Posterior vena cava (tissue), 2 donors: ENCODE measurements at regions of chr13 and their contacts with region 1.

Region 1: DNA sequence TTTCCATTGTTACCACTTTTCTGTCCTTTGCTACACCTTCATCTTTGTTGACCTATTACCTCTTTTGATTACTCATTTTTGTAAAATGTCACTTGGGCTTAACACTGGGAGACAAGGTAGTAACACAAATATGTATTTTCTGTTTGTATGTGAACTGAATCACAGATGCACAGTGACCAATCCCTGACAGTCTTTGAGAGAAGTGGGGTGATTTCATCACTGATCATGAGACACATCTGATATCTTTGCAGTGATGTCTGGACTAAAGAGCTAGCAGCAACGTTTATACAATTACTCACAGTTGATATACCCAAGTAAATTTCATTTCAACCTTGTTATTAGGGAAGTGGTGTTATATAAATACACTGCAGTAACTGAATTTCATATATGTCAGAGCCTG is 1397.4 kb upstream of the SPRY2 start:
- DNase-seq: no peak

Region 2: DNA sequence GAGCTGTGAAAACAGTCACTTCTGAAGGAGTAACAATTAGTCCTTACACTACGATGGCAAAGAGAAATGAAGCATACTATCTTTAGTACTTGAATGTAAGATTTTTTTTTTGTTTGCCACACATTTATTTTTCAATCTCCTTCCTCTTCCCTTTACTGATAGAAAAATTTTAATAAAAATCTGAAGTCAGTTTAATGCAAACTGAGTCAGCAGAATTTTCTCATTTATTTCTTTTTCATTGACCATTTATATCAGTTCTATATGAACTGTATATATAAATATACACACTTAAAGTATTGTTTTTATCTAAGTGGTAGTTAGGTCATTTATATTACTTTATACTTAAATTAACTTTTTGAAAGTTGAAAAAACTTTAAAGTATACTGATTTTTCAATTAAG is 388.3 kb before region 1 on chr13:
- intact Hi-C with region 1: loop called in 1 of 2 experiments (anchors 5 kb)
- DNase-seq: no peak

Region 3: DNA sequence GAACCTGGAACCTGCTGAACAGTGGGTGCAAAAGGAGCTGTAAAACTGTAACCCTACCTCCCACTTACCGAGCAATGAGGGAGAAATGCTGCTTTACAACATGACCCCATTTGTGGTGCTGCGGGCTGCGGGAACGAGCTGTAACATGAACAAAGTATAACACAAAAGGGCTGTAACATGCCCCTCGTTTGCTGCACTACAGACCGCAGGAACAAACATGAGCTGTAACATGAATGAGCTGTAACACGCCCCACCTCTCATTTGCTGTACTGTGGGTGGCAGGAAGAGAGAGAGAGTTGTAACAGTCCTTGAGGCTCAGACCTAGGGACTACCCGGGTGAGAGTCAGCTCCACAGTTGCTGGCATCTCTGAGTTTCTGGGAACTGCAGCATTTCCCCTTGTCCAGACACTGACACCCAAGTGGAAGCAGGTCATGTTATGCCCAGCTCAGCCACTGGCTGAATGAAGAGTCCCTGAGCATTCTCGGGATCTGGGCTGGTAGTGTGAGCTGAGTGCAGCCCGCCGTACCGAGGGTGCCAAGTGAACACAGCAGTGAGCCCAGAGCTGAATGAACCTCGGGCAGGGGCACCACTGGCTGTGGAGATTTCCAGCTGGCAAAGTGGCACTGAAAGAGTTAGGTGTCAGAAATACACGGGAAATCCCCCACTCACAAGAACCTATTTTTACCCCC is 12.2 kb before region 1 on chr13:
- intact Hi-C with region 1: no loop called
- DNase-seq: no peak